Activated naive CD4-positive, alpha-beta T cell treated with anti-CD3 and anti-CD28 coated beads, Interleukin-2, amount 10 ng/mL, durations not matched to agents 7 days and 5 days (primary cell): ENCODE measurements at regions of chr12 and their contacts with region 1.

Region 1: DNA sequence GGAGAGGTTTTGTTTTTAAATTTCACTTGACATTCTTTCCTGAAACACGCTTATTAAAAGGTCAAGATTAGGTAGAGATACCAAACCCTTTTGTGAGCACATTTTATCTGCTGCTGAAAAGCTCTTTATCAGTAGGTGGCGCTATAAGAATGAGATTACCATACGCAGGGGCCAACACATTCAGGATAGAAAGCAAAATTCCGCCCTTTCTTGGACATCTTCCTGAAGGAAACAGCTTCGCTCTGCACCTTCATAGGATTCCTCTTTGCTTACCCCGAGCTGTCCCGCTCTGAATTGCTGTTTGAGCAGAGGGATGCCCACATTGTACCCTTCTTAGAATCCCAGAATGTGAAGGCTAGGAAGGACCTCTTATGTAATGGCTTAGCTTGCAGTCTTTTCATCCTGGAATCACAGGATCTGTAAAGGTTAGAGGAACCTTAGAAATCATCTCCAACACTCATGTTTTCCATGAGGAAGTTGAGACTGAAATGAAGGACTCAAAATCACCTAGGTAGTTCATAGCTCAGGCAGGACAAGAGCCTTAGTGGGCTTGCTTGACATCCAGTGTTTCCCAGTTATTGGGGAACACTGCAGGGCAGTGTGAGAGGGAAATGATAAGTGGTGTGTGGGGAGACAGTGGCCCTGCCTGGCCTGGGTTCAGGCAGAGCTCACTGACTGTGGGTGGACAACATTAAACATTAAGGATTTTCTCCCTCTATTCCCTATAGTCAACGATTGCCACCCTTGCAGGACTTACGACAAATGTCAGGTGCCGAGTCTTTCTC is 38.7 kb upstream of the CRY1 start:
- DNase-seq: no peak
- H3K4me3 Mint-ChIP-seq: no peak overlapping the region
- H3K27ac Mint-ChIP-seq: no peak overlapping the region
- H3K4me1 Mint-ChIP-seq: no peaks in the 10 kb centered on the region
- H3K27me3 Mint-ChIP-seq: no peaks in the 10 kb centered on the region

Region 2: GRCh38 chr12:107111314-107111713 is 20.7 kb before region 1 on chr12:
- CTCF ChIA-PET with region 1: interaction called, 13 read pairs
- DNase-seq: no peak
- H3K4me3 Mint-ChIP-seq: no peak overlapping the region
- H3K27ac Mint-ChIP-seq: no peak overlapping the region
- H3K4me1 Mint-ChIP-seq: no peaks in the 10 kb centered on the region
- H3K27me3 Mint-ChIP-seq: peaks cover 11% of the 10 kb centered on the region

Region 3: DNA sequence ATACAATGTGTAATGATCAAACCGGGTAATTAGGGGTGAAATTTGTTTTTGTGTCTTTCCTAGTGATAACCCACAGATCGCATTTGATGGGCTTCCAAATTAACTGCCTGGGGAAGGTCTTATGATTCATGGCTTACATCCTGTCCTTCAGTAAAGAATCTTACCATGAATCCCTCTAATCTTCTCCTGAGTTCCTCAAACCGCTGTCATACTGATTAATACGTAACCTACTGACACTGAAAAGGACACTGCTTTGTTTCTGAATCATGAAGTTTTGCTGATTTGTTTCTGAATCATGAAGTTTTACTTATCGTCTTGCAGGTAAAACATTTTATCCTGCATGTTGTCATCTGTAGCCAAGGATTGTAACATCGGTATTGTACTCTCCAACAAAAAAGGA is 13.4 kb after region 1 on chr12:
- CTCF ChIA-PET with region 1: interaction called, 17 read pairs
- DNase-seq: no peak
- H3K4me3 Mint-ChIP-seq: no peak overlapping the region
- H3K27ac Mint-ChIP-seq: no peak overlapping the region
- H3K4me1 Mint-ChIP-seq: no peaks in the 10 kb centered on the region
- H3K27me3 Mint-ChIP-seq: no peaks in the 10 kb centered on the region

Region 4: DNA sequence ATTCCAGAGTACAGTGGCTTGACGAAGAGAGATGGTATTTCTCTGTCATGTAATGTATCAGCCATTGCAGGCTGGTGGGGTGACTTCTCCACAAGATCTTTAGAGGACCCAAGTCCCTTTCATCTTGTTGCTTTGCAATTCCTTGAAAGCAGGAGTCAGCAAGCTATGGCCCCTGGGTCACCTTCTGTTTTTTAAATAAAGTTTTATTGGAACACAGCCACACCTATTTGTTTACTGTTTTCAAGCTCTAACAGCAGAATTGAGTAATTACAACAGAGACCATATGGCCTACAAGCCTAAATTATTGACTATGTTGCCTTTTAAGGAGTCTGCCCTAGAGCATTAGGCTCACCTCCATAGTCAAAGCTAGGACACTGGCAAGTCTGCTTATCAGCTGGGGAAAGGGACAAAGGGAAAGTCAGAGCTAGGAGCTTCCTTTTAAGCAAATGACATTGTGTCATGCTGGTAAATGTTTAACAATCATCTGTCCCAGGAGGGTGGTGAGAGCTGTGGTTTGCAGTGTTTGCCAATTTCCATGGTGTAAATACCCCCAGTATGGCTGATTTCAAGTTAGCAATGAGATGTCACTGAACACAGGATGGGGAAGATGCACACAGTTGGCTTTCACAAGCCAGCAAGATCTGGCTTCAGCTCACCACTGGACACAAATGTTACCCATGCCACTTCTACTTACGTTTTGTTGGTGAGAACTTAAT is 465.8 kb after region 1 on chr12:
- CTCF ChIA-PET with region 1: interaction called, 15 read pairs
- DNase-seq: no peak
- H3K4me3 Mint-ChIP-seq: no peak overlapping the region
- H3K27ac Mint-ChIP-seq: no peak overlapping the region
- H3K4me1 Mint-ChIP-seq: no peaks in the 10 kb centered on the region
- H3K27me3 Mint-ChIP-seq: no peaks in the 10 kb centered on the region